Mammary epithelial cell (primary cell): ENCODE measurements at regions of chr7 and their contacts with region 1.

Region 1: DNA sequence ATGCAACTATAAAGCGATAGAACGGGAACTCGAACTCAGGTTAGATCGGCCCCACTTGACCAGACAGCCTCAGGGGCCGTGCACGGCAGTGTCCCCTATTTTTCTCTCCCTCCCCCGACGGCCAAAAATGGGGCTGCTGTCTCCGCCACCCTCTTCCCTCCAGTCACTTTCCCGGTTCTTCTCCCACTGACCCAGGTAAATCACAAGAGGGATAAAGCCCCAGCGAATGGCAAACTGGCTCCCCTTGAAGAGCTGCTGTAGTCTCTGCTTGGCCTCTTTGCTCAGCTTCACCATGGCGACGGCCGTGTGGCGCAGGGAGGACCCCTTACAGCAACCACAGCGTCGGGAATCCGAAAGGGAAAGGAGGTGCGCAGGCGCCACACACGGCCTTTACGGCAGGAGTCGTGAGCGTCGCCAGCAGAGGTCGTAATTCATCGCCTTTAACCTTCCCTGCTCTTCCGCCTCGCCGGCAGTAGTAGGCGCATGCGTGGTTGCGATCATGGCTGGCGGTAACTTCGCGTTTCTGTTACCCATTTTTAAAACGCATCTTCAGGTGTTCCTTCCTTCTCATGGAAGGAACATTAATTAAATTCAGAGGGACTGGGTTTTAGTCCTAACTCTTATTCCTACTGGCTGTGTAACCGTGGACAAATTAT is at the start of gene TOMM7:
- DNase-seq: peak; percentile 92
- H3K4me3 ChIP-seq: peak within 1 kb of the TSS; percentile 76 to 93 (median 88)
- H3K27ac ChIP-seq: peak within 1 kb of the TSS; percentile 84
- H3K4me1 ChIP-seq: peaks cover 18% of the 10 kb centered on the region
- H3K27me3 ChIP-seq: no peaks in the 10 kb centered on the region
- CTCF ChIP-seq: peak in 1 of 2 donors; percentile 45
- total RNA-seq, gene TOMM7: 77.5 to 239 TPM

Region 2: GRCh38 chr7:22732556-22733126 is 90.0 kb before region 1 on chr7:
- CTCF ChIA-PET with region 1: no interaction called
- dilution Hi-C with region 1: no loop called
- in situ Hi-C with region 1: no loop called
- intact Hi-C with region 1: no loop called
- DNase-seq: peak; percentile 60
- H3K4me3 ChIP-seq: no peak overlapping the region
- H3K27ac ChIP-seq: no peak overlapping the region
- H3K4me1 ChIP-seq: peaks cover 22% of the 10 kb centered on the region
- H3K27me3 ChIP-seq: no peaks in the 10 kb centered on the region
- CTCF ChIP-seq: peak; percentile 76 to 85

Region 3: DNA sequence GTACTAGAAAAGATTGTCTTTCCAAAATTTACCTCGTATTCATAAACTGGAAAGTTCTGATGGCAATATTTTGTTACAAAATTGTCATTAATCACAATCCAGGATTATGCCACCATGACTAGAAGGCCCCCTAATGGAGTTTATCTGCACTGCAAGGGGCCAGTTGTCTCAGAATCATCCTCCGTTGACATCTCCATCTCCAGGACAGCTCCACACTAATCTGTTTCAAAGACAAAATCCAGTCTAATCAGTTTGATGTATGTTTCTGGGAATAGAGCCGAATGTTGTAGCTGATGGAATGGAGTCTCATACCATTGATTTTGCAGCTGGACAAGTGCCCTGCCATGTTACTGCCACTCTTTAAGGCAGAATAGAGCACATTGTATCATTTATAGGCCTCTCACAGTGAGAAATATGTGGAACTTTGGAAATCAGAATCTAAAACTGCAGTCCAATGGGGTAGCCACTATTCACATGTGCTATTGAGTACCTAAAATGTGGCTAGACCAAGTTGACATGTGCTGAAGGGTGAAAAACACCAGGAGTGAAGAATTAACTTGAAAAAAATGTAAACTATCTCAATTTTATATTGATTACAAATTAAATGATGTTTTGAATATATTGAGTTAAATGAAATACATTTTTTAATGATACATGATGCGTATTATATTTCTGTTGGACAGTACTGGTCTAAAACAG is 38.3 kb after region 1 on chr7:
- CTCF ChIA-PET with region 1: no interaction called
- dilution Hi-C with region 1: no loop called
- in situ Hi-C with region 1: no loop called
- intact Hi-C with region 1: loop called (anchors 1 kb)
- DNase-seq: peak; percentile 22
- H3K4me3 ChIP-seq: no peak overlapping the region
- H3K27ac ChIP-seq: peak overlapping the region; percentile 99
- H3K4me1 ChIP-seq: peaks cover 53% of the 10 kb centered on the region
- H3K27me3 ChIP-seq: no peaks in the 10 kb centered on the region
- CTCF ChIP-seq: peak; percentile 51 to 62

Region 4: DNA sequence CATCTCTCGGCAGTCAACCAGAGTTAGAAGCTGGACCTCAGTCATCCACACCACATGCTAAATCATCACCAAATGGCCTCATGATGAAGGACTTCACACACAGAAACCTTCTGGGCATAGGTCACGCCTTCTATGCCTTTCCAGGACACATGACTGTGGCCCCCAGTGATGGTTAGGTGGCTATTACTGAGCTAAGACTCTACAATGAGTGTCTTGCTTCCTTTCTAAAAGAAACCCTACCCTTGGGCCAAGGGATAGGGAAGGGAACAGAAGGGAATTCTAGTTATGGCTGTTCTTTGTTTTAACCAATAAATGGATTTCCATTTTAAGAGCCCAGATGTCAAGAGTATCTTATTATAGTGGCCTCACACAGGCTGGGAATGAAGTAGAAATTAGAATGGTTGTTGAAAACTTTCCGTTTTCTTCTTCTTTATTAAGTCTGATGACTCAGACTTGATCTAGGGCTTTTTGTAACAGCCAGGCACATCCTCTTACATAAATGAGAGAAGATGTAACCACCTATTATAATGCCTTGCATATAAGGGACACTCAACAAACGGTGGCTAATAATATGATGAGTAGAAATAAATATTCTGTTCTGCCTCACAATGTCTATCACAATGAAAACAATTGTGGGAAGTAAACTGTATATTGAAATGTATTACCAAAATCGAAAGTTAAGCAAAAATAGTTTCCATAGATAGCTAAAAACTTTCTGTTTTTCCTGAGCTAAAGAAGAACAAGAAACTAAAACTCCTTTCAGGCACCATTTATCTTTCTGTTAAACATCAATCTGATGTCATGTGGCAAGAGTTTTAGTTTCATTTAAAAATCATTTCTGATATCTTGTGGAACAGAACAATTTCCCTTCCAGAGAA is 62.5 kb after region 1 on chr7:
- CTCF ChIA-PET with region 1: no interaction called
- dilution Hi-C with region 1: no loop called
- in situ Hi-C with region 1: no loop called
- intact Hi-C with region 1: no loop called
- DNase-seq: no peak
- H3K4me3 ChIP-seq: no peak overlapping the region
- H3K27ac ChIP-seq: no peak overlapping the region
- H3K4me1 ChIP-seq: peaks cover 6% of the 10 kb centered on the region
- H3K27me3 ChIP-seq: no peaks in the 10 kb centered on the region
- CTCF ChIP-seq: no peak

Region 5: GRCh38 chr7:23055582-23056178 is 233.1 kb after region 1 on chr7:
- CTCF ChIA-PET with region 1: no interaction called
- dilution Hi-C with region 1: no loop called
- in situ Hi-C with region 1: loop called in 1 of 2 experiments (anchors 10 kb)
- intact Hi-C with region 1: loop called (anchors 1 kb)
- DNase-seq: peak; percentile 57
- H3K4me3 ChIP-seq: no peak overlapping the region
- H3K27ac ChIP-seq: no peak overlapping the region
- H3K4me1 ChIP-seq: peaks cover 2% of the 10 kb centered on the region
- H3K27me3 ChIP-seq: no peaks in the 10 kb centered on the region
- CTCF ChIP-seq: peak; percentile 94 to 95